ENCODE measurements at regions of chr10 and their contacts with region 1.

Region 1: GRCh38 chr10:100508691-100509150 is 10.9 kb downstream of the SEC31B start:
- DNase-seq: peak; percentile 67
- H3K27ac ChIP-seq: no peak overlapping the region
- CTCF ChIP-seq: peak; percentile 62

Region 2: GRCh38 chr10:100338434-100339036 is 170.2 kb before region 1 on chr10:
- CTCF ChIA-PET with region 1: interaction called, 15 read pairs
- POLR2A ChIA-PET with region 1: no interaction called
- DNase-seq: peak; percentile 84
- H3K27ac ChIP-seq: no peak overlapping the region
- CTCF ChIP-seq: peak; percentile 93

Measured in RWPE1 (cell line).